CD4-positive, alpha-beta memory T cell (primary cell): ENCODE measurements at regions of chr19 and their contacts with region 1.

Region 1: GRCh38 chr19:13861732-13862531 is 15.0 kb upstream of the NANOS3 start:
- DNase-seq: peak; percentile 81 to 94 (median 84)
- H3K4me3 ChIP-seq: peak overlapping the region; percentile 55 to 68
- H3K4me3 Mint-ChIP-seq: peak overlapping the region; percentile 91 to 98 (median 95)
- H3K27ac ChIP-seq: peak overlapping the region; percentile 96
- H3K27ac Mint-ChIP-seq: peak overlapping the region; percentile 98 to 100 (median 100)
- H3K4me1 ChIP-seq: peaks cover 35% of the 10 kb centered on the region
- H3K4me1 Mint-ChIP-seq: peaks cover 24 to 54% (median 38%) of the 10 kb centered on the region in 4 donors
- H3K27me3 ChIP-seq: peaks cover 19% of the 10 kb centered on the region
- H3K27me3 Mint-ChIP-seq: peaks cover 16 to 20% of the 10 kb centered on the region in 2 donors

Region 2: DNA sequence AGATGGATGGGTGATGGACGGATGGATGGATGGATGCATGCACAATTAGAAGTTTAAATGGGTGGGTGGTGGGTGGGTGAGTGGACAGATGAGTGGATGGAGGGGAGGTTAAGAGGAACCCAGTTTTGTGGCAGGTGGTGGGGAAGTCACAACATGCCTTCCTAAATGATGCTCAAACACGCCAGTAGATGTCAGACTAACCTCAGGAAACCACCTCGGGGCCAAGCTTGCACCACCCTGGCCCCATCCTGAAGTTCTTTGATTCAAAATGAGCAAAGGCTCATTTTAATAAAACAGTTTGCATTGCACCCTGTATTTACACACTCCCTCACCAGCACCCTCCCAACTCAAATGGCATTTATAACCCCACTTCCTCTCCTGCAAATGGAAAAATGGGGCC is 264.3 kb before region 1 on chr19:
- CTCF ChIA-PET with region 1: interaction called, 10 read pairs
- POLR2A ChIA-PET with region 1: interaction called, 3 read pairs
- intact Hi-C with region 1: no loop called
- DNase-seq: peak; percentile 44 to 55 (median 49)
- H3K4me3 ChIP-seq: no peak overlapping the region
- H3K4me3 Mint-ChIP-seq: no peak overlapping the region
- H3K27ac ChIP-seq: no peak overlapping the region
- H3K27ac Mint-ChIP-seq: no peak overlapping the region
- H3K4me1 ChIP-seq: no peaks in the 10 kb centered on the region
- H3K4me1 Mint-ChIP-seq: peaks cover 0 to 2% (median 0%) of the 10 kb centered on the region in 4 donors
- H3K27me3 ChIP-seq: no peaks in the 10 kb centered on the region
- H3K27me3 Mint-ChIP-seq: peaks cover 15 to 16% of the 10 kb centered on the region in 2 donors

Region 3: DNA sequence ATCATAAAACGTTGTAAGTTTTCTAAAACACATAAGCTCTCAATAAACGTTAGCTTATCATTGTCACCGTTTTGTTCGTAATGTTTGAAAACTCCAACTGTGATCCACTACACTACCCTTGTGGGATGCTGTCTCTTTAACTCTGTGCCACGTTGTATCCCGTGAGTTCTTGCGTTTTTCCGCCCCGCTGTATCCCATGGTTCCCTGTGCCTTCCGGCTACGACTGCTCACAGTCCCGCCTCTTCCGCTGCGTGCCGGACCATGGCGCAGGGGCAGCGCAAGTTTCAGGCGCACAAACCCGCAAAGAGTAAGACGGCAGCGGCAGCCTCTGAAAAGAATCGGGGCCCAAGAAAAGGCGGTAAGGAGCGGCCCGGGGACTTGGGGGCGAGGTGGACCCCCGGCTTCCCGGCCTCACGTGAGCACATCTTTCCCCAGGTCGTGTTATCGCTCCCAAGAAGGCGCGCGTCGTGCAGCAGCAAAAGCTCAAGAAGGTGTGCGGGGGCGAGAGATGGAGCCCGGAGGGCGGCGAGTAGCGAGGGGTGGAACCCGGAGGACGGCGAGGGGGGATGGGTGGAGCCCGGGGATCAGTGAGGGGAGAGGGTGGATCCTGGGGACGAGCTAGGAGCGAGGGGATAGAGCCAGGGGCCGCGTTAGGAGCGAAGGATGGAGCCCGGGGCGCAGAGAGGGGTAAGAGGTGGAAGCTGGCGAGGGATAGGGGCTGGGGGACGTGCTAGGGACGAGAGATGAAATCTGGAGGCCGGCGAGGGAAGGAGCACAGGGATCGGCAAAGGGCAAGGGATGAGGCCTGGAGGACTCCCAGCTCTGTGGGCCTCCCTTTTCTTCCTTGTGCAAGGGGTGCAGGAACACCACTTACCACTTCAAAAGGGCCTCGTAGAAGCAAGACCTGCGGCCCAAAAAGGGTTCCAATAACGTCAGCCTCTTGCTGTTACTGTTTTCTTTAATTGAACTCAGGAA is 87.4 kb before region 1 on chr19 and contains the start of gene C19orf53:
- CTCF ChIA-PET with region 1: interaction called, 16 read pairs
- POLR2A ChIA-PET with region 1: interaction called, 29 read pairs
- intact Hi-C with region 1: no loop called
- DNase-seq: peak; percentile 84 to 92 (median 87)
- H3K4me3 ChIP-seq: peak within 1 kb of the TSS; percentile 87 to 90
- H3K4me3 Mint-ChIP-seq: peak within 1 kb of the TSS; percentile 96 to 100 (median 100)
- H3K27ac ChIP-seq: peak within 1 kb of the TSS; percentile 84
- H3K27ac Mint-ChIP-seq: peak within 1 kb of the TSS; percentile 92 to 100 (median 98)
- H3K4me1 ChIP-seq: peaks cover 23% of the 10 kb centered on the region
- H3K4me1 Mint-ChIP-seq: peaks cover 12 to 36% (median 25%) of the 10 kb centered on the region in 4 donors
- H3K27me3 ChIP-seq: no peaks in the 10 kb centered on the region
- H3K27me3 Mint-ChIP-seq: no peaks in the 10 kb centered on the region
- total RNA-seq, gene C19orf53: 84.3 to 85.0 TPM

Region 4: DNA sequence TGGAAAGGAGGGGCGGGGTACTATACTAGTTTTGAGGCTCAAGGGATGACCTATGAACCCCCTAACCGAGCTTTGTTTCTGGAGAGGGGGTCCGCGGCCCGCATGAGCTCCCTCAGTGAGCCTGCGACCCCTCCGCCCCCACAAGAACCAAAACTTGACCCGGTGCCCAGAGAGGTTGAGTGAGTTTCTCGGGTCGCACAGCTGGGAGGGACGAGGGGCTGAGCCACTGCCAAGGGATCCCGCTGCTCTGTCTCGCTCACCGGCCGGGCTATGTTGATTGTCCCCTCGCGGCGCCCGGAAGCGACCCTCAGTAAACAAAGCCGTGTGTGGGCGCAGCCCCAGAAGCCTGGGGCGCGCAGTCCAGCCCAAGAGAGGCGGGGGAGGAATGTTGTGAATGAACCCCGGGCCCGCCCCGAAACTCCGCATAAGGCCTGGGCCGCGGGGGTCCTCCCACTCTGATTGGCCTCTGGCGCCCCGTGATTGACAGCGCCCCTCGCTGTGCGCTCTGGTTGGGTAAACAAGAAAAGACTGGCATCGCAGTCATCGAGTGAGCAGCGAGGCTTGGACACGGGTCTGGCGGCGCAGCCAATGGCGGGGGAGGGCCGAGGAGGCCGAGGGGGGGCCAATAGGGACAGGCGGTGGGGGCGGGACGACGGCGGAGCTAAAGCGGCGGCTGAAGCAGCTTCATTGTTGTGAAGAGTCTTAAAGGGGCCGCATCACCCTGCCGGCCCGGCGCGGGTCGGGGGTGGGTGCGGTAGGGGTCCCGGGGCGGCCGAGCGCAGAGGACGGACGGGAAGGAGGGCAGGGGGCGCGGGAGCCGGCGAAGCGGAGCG is 67.0 kb before region 1 on chr19 and contains the start of gene ZSWIM4:
- CTCF ChIA-PET with region 1: interaction called, 307 read pairs
- POLR2A ChIA-PET with region 1: interaction called, 153 read pairs
- intact Hi-C with region 1: no loop called
- DNase-seq: peak; percentile 81 to 85 (median 82)
- H3K4me3 ChIP-seq: peak within 1 kb of the TSS; percentile 61 to 66
- H3K4me3 Mint-ChIP-seq: peak within 1 kb of the TSS; percentile 91 to 97 (median 96)
- H3K27ac ChIP-seq: peak within 1 kb of the TSS; percentile 53
- H3K27ac Mint-ChIP-seq: peak within 1 kb of the TSS; percentile 92 to 98 (median 95)
- H3K4me1 ChIP-seq: peaks cover 23% of the 10 kb centered on the region
- H3K4me1 Mint-ChIP-seq: peaks cover 21 to 39% (median 31%) of the 10 kb centered on the region in 4 donors
- H3K27me3 ChIP-seq: no peaks in the 10 kb centered on the region
- H3K27me3 Mint-ChIP-seq: no peaks in the 10 kb centered on the region
- total RNA-seq, gene ZSWIM4: 6.4 to 6.6 TPM

Region 5: DNA sequence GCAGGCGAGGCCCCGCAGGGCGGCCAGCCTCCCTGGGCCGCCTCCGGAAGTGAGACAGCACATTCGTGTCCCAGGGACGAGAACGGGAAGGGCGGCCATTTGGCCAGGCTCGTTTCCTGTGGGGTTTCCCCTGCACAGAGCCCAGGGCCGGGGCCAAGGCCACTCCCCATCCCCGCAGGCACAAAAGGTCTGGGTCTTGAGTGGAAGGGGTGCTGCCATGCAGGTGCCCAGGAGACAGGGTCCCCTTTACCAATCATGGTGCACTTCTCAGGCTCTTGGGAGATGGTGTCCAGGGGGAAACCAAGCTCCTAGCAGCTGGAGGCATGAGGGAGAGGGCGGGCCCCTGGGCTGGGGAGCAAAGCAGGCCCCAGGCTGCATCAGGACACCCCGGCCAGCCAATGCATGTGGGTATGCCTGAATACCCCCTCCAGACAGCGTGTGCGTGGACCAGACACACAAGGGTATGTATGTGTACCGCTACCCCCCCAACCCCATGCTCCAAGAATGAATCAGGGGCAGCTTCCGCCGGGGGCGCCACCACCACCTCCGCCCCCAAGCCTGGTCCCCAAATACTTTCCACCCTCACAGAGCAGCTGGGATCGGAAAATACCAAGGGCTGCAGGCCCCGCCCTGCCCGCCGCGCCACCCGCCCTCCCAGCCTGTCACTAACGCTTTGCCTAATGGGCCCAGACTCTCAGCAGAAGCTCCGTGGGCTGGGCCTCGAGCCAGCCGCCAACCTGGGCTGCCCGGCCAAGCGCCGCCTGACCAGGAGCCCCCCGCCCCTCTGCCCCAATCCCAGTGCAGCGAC is 22.6 kb before region 1 on chr19:
- CTCF ChIA-PET with region 1: interaction called, 37 read pairs
- POLR2A ChIA-PET with region 1: interaction called, 113 read pairs
- intact Hi-C with region 1: loop called (anchors 1 kb)
- DNase-seq: peak; percentile 75 to 96 (median 79)
- H3K4me3 ChIP-seq: peak overlapping the region; percentile 63 to 86
- H3K4me3 Mint-ChIP-seq: peak overlapping the region; percentile 84 to 97 (median 95)
- H3K27ac ChIP-seq: peak overlapping the region; percentile 98
- H3K27ac Mint-ChIP-seq: peak overlapping the region; percentile 99 to 100 (median 99)
- H3K4me1 ChIP-seq: peaks cover 78% of the 10 kb centered on the region
- H3K4me1 Mint-ChIP-seq: peaks cover 25 to 87% (median 46%) of the 10 kb centered on the region in 4 donors
- H3K27me3 ChIP-seq: no peaks in the 10 kb centered on the region
- H3K27me3 Mint-ChIP-seq: no peaks in the 10 kb centered on the region

Region 6: GRCh38 chr19:13952154-13953035 is 90.5 kb after region 1 on chr19 and contains the start of gene DCAF15:
- CTCF ChIA-PET with region 1: no interaction called
- POLR2A ChIA-PET with region 1: no interaction called
- intact Hi-C with region 1: no loop called
- DNase-seq: peak; percentile 98 to 100 (median 99)
- H3K4me3 ChIP-seq: peak within 1 kb of the TSS; percentile 43 to 71
- H3K4me3 Mint-ChIP-seq: peak within 1 kb of the TSS; percentile 88 to 96 (median 92)
- H3K27ac ChIP-seq: peak within 1 kb of the TSS; percentile 80
- H3K27ac Mint-ChIP-seq: peak within 1 kb of the TSS; percentile 86 to 99 (median 96)
- H3K4me1 ChIP-seq: peaks cover 22% of the 10 kb centered on the region
- H3K4me1 Mint-ChIP-seq: peaks cover 12 to 28% (median 17%) of the 10 kb centered on the region in 4 donors
- H3K27me3 ChIP-seq: no peaks in the 10 kb centered on the region
- H3K27me3 Mint-ChIP-seq: no peaks in the 10 kb centered on the region
- total RNA-seq, gene DCAF15: 92.9 to 96.7 TPM

Region 7: GRCh38 chr19:14167576-14168138 is 305.7 kb after region 1 on chr19:
- CTCF ChIA-PET with region 1: no interaction called
- POLR2A ChIA-PET with region 1: no interaction called
- intact Hi-C with region 1: no loop called
- DNase-seq: peak; percentile 26 to 42 (median 32)
- H3K4me3 ChIP-seq: peak overlapping the region in 1 of 2 donors; percentile 44
- H3K4me3 Mint-ChIP-seq: peak overlapping the region; percentile 81 to 92 (median 88)
- H3K27ac ChIP-seq: peak overlapping the region; percentile 61
- H3K27ac Mint-ChIP-seq: peak overlapping the region; percentile 87 to 97 (median 93)
- H3K4me1 ChIP-seq: peaks cover 26% of the 10 kb centered on the region
- H3K4me1 Mint-ChIP-seq: peaks cover 17 to 30% (median 23%) of the 10 kb centered on the region in 4 donors
- H3K27me3 ChIP-seq: no peaks in the 10 kb centered on the region
- H3K27me3 Mint-ChIP-seq: no peaks in the 10 kb centered on the region